ENCODE measurements at regions of chr1 and their contacts with region 1.

Region 1: GRCh38 chr1:110087812-110088738 is 17.6 kb upstream of the ALX3 start:
- DNase-seq: peak; percentile 27
- H3K4me3 Mint-ChIP-seq: no peak overlapping the region
- H3K27ac Mint-ChIP-seq: no peak overlapping the region
- H3K4me1 Mint-ChIP-seq: peaks cover 26% of the 10 kb centered on the region
- H3K27me3 Mint-ChIP-seq: peaks cover 51% of the 10 kb centered on the region

Region 2: GRCh38 chr1:110068646-110069403 is 19.2 kb before region 1 on chr1:
- intact Hi-C with region 1: loop called (anchors 1 kb)
- DNase-seq: no peak
- H3K4me3 Mint-ChIP-seq: peak overlapping the region; percentile 53
- H3K27ac Mint-ChIP-seq: peak overlapping the region; percentile 85
- H3K4me1 Mint-ChIP-seq: peaks cover 12% of the 10 kb centered on the region
- H3K27me3 Mint-ChIP-seq: peaks cover 64% of the 10 kb centered on the region

Region 3: DNA sequence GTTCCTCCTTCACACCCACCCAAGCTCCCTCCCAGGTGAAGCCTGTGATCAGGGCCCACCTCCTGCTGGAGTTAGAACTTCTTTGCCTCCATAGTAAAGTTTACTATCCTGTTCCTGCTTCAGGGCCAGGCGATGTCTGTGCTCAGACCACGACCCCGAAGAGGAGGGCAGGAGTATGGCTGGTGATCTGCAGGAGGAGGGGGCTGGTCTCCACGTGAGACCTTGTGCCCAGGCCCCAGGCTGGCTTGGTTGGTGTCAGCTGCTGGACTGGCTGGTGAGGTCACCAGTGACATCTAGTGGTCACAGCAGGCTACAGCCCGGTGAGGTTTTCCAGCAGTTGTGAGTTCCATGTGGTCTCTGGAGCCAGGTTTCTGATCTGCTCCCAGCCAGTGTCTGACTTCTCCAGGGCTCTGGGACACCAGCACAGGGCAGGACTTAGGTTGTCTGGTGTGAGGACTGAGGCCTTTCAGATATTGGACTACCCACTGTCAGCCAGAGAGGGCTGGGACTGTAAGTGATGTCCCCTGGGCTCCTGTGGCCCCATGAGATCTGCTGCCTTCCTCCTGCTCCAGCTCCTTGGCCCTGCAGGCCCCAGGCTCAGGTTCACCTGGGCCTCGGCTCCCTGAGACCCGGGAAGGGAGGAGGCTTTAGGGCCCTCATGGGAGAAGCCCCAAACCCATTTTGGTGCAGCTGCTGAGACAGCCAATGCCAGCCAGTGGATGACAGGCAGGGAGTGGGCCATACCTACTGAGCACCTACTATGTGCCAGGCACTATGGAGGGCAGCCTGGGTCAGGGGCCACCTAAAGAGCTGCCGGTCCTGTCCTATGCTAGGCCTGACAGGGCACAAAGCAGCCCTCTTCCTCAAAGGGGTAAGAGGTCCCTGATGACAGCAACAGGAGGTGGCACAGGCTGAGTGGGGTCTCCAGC is 18.2 kb after region 1 on chr1:
- intact Hi-C with region 1: loop called (anchors 1 kb)
- DNase-seq: peak; percentile 40
- H3K4me3 Mint-ChIP-seq: no peak overlapping the region
- H3K27ac Mint-ChIP-seq: no peak overlapping the region
- H3K4me1 Mint-ChIP-seq: no peaks in the 10 kb centered on the region
- H3K27me3 Mint-ChIP-seq: peaks cover 13% of the 10 kb centered on the region

Region 4: DNA sequence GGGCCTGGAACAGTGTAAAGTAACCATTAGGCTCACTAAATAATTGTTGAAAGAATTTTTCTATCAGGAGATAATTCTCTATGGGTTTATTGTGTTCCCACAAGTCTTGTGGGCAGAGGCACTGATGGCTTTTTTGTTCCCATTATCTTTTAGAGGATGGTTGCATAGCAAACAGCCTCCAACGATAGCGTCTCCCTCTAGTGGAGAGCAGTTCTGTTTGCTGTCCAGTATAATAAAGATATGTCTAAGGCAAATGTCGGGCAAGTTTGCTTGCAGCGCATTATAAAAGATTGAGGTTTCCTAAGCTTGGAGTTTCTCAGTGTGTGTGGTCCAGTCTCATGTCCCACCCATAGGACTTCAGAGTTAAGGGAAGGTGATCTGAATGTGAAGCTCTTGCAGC is 60.9 kb after region 1 on chr1:
- intact Hi-C with region 1: loop called (anchors 5 kb)
- DNase-seq: no peak
- H3K4me3 Mint-ChIP-seq: no peak overlapping the region
- H3K27ac Mint-ChIP-seq: no peak overlapping the region
- H3K4me1 Mint-ChIP-seq: no peaks in the 10 kb centered on the region
- H3K27me3 Mint-ChIP-seq: peaks cover 35% of the 10 kb centered on the region

Measured in activated T-helper 1 cell treated with anti-CD3 and anti-CD28 coated beads, Interleukin-12 subunit alpha, Interleukin-12 subunit beta, Interleukin-2, Interleukin-4 antibody, amounts not matched to agents 30 ng/mL and 10 ng/mL and 1 ng/mL, durations not matched to agents 14 hours and 24 hours and 36 hours (primary cell).